ENCODE measurements at regions of chr13 and their contacts with region 1.

Region 1: DNA sequence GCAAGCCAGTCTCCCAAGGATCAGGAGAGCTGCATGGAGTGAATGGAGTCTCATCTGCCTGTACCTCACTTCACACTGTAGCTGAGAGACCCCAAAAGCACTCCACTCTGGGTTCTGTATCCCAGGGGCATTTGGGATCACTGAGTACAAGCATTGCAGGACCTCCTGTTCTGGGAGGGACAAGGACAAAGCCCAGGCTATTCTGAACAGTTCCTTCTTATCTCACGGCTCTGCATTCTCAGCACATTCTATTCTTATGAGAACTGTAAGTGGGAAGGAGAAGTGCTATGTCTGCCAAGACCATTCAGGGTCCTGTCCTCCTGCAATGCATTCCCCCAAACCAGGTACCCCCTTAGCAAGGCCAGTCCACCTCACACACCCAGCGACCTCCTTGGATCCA is 42.8 kb downstream of the RNF6 start:
- DNase-seq: no peak
- H3K4me3 ChIP-seq: no peak overlapping the region
- H3K27ac ChIP-seq: no peak overlapping the region
- H3K4me1 ChIP-seq: no peaks in the 10 kb centered on the region
- H3K27me3 ChIP-seq: no peaks in the 10 kb centered on the region
- CTCF ChIP-seq: no peak
- POLR2A ChIP-seq: no peak

Region 2: GRCh38 chr13:26222520-26223046 is 43.2 kb after region 1 on chr13:
- intact Hi-C with region 1: no loop called
- DNase-seq: no peak
- H3K4me3 ChIP-seq: peak overlapping the region; percentile 83 to 97 (median 86)
- H3K27ac ChIP-seq: peak overlapping the region; percentile 93 to 96
- H3K4me1 ChIP-seq: peaks cover 0 to 16% of the 10 kb centered on the region in 2 donors
- H3K27me3 ChIP-seq: peaks cover 0 to 4% of the 10 kb centered on the region in 2 donors
- CTCF ChIP-seq: no peak
- POLR2A ChIP-seq: no peak

Region 3: DNA sequence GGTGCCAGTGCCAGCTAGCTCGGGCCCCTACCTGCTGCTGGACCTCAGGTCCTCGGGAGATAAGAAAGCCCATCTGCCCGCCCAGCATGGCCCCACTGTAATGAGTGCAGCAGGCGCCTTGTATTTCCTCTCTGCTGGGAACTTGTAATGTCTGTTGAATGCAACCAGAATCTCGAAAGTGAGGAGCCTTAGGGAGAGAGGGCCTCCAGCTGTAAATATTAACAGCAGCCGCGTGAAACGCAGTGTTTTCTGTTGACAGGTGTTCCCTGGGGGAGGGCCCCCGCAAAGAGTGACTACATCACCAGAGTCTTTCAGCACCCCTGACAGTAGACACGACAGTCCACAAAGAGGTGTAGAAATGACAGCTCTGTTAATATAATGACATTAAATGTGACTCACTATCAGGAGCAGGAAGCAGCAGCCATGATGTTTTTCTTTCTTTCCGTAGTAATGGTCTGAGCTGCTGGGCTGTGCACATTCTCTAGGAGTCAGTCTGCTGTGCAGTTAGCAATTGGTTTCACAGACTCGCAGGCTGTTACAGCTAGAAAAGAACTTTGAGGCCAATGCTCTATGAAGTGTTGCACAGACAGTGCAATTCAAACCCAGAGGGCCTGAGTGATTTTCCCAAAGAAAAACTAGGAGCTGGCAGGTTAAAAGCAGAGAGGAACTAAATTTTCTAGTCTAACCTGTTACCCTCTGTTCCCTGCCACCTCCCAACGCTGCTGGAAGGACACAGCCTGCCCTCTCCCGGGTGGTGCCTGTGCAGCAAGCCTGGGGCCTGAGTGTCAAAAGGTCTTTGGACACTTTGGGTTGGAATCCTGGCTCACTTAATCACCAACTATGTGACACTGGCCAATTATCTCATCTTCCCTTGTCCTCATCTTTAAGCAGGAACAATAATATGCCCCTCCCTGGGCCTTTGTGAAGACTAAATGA is 319.6 kb after region 1 on chr13:
- intact Hi-C with region 1: loop called (anchors 5 kb)
- DNase-seq: no peak
- H3K4me3 ChIP-seq: no peak overlapping the region
- H3K27ac ChIP-seq: no peak overlapping the region
- H3K4me1 ChIP-seq: no peaks in the 10 kb centered on the region
- H3K27me3 ChIP-seq: no peaks in the 10 kb centered on the region
- CTCF ChIP-seq: no peak
- POLR2A ChIP-seq: no peak